Esophagus muscularis mucosa (tissue), 4 donors: ENCODE measurements at regions of chr7 and their contacts with region 1.

Region 1: DNA sequence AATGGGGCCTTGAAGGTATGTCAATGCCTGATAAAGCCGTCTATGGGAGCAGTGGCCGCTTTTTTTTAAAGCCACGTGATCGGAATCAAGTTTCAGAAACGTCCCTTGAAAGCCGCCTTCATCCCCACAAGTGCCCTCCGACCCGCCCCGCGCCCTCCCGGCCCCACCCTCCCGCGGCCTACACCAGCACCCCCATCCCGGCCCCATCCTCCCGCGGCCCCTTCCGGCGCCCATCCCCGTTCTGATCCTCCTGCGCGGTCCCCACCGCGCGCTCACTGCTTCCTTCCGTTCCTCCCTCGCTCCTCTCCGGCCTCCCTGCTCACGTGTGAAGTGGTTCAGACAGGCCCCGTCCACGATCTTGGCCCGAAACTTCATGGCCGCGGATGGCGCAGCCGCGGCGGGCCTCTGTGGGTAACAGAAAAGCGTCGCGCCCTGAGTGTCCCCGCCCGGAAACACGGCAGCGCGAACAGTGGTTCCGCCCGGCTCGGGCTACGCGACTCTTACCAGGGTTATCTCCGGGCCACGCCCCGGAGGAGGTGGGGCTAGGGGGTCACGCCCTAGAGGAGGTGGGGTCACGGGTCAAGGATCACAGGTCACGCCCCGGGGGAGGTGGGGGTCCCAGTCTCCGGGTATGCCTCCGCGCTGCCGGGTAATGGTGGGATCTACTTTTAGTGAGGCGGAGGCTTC is at the start of gene HUS1:
- DNase-seq: peak; percentile 97
- H3K4me3 ChIP-seq: peak within 1 kb of the TSS; percentile 66 to 89 (median 80)
- H3K27ac ChIP-seq: peak within 1 kb of the TSS; percentile 81 to 92 (median 90)
- H3K4me1 ChIP-seq: peaks cover 14 to 23% (median 17%) of the 10 kb centered on the region in 4 donors
- H3K27me3 ChIP-seq: no peaks in the 10 kb centered on the region
- CTCF ChIP-seq: no peak
- EP300 ChIP-seq: no peak
- POLR2A ChIP-seq: peak; percentile 37
- total RNA-seq, gene HUS1: 11.5 to 15.6 (median 13.7) TPM

Region 2: GRCh38 chr7:48089046-48090003 is 110.0 kb after region 1 on chr7 and contains the start of gene UPP1:
- intact Hi-C with region 1: loop called (anchors 2 kb)
- DNase-seq: peak; percentile 98
- H3K4me3 ChIP-seq: peak within 1 kb of the TSS; percentile 71 to 94 (median 90)
- H3K27ac ChIP-seq: peak within 1 kb of the TSS; percentile 85 to 90 (median 86)
- H3K4me1 ChIP-seq: peaks cover 21 to 43% (median 27%) of the 10 kb centered on the region in 4 donors
- H3K27me3 ChIP-seq: no peaks in the 10 kb centered on the region
- CTCF ChIP-seq: no peak
- EP300 ChIP-seq: no peak
- POLR2A ChIP-seq: peak; percentile 58
- total RNA-seq, gene UPP1: 7.1 to 26.8 (median 10.6) TPM